ENCODE measurements at regions of chr16 and their contacts with region 1.

Region 1: DNA sequence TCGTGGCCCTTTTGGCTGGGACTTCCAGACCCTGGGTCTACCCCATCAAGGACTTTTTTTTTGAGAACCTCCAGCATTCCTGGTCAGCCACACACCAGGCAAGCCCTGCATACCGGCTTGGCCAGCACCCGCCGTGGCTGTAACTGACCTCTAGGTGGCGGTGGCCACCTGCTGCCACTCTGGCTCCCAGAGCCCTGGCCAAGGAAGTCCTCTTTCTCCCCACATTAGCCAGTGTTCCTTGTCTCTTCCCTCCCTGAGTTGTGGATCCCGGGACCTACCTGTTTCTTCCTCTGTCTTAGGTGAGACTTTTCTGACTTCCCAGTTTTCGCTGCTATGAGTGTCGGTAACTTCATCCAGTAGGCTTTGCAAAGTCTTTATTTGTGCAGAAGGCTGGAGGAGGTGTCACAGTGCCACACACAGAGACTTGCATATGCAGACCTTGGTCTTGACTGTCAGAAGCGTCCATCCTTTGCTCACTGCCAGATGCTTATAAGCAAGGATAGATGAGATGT is 348.3 kb downstream of the CPPED1 start:
- DNase-seq: no peak
- H3K4me3 ChIP-seq: no peak overlapping the region
- H3K27ac ChIP-seq: no peak overlapping the region
- H3K4me1 ChIP-seq: peaks cover 0 to 12% (median 11%) of the 10 kb centered on the region in 4 donors
- H3K27me3 ChIP-seq: no peaks in the 10 kb centered on the region
- CTCF ChIP-seq: peak in 3 of 4 experiments; percentile 41 to 58 (median 58)
- EP300 ChIP-seq: no peak
- POLR2A ChIP-seq: no peak

Region 2: DNA sequence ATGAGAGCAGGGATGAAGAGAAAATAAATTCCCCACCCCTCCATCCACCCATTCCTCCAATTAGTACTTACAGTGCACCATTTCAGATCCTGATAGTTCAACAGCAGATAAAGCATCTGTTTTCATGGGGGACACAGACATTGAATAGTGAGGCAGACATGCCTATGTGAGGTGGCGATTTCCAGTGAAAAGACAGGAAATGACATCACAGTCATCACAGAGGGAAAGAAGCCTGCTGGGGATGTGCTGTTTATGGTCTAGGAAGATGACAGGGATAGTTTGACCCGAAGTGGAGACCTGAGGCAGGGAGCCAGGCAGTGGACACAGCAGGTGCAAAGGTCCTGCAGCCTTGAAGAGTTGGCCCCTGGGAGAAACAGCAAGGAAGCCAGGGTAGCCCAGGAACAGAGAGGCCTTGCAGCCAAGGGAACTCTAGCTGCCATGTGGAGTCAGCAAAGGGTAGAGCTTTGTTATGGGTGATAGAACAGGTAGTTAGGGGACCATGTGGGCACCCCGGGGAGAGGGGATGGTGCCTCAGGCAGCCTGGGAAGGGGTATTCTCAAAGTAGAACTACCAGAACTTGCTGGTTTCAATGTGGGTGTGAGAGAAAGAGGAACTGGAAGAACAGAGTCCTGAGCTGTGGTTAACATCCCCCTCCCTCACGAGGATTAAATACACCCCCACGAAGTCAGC is 91.7 kb after region 1 on chr16:
- intact Hi-C with region 1: no loop called
- DNase-seq: no peak
- H3K4me3 ChIP-seq: no peak overlapping the region
- H3K27ac ChIP-seq: no peak overlapping the region
- H3K4me1 ChIP-seq: no peaks in the 10 kb centered on the region
- H3K27me3 ChIP-seq: no peaks in the 10 kb centered on the region
- CTCF ChIP-seq: no peak
- EP300 ChIP-seq: no peak
- POLR2A ChIP-seq: no peak

Region 3: DNA sequence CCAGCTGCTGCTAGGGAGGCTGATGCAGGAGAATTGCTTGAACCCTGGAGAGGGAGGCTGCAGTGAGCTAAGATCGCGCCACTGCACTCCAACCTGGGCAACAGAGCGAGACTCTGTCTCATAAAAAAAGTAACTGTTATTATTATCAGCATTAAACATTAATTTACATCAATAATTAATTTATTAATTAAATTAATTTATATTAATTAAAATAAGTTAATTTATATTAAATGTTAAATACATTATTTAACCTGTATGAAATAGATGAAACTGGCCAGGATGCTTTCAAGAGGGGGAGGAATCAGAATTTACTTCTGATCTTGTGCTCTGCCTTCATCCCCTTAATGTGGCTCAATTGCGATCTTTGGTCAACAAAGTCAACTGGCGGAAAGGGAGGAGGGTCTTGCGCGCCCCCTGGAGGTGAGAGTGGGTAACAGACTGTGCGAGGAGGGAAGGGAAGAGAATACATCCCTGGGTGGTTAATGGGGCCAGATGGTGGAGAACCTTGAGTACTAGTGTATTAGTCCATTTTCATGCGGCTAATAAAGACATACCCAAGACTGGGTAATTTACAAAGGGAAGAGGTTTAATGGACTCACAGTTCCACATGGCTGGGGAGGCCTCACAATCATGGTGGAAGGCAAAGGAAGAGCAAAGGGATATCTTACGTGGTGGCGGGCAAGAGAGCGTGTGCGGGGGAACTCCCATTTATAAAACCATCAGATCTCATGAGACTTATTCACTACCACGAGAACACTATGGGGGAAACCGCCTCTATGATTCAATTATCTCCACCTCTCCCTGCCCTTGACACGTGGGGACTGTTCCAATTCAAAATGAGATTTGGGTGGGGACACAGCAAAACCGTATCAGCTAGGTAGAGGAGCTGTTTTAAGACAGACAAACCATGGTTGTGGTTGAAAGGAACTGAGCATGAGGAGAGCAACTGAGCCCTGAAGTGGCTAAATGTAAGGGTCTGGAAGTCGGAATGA is 364.1 kb after region 1 on chr16:
- intact Hi-C with region 1: loop called (anchors 10 kb)
- DNase-seq: peak; percentile 74
- H3K4me3 ChIP-seq: no peak overlapping the region
- H3K27ac ChIP-seq: no peak overlapping the region
- H3K4me1 ChIP-seq: no peaks in the 10 kb centered on the region
- H3K27me3 ChIP-seq: no peaks in the 10 kb centered on the region
- CTCF ChIP-seq: peak; percentile 41 to 77 (median 74)
- EP300 ChIP-seq: no peak
- POLR2A ChIP-seq: no peak